GM23248 (cell line): ENCODE measurements at regions of chr16 and their contacts with region 1.

Region 1: GRCh38 chr16:51151961-51152663 is 1.0 kb upstream of the SALL1 start:
- DNase-seq: peak; percentile 94
- H3K4me3 ChIP-seq: peak overlapping the region; percentile 97
- H3K27ac ChIP-seq: peak overlapping the region; percentile 94
- H3K4me1 ChIP-seq: peaks cover 29% of the 10 kb centered on the region
- H3K27me3 ChIP-seq: no peaks in the 10 kb centered on the region

Region 2: DNA sequence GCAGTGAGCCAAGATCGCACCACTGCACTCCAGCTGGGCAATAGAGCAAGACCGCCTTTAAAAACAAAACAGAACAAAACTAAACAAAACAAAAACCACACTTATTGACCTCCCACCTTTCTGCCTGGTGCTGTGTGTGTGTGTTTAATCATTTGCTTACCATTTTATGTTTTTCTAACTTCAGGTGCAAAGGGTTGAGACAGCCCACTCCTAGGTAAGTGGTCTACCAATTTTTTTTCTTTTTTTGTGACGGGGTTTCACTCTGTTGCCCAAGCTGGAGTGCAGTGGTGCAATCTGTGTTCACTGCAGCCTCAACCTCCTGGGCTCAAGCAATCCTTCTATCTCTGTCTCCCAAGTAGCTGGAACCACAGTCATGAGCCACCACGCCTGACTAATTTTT is 66.8 kb before region 1 on chr16:
- in situ Hi-C with region 1: no loop called
- DNase-seq: no peak
- H3K4me3 ChIP-seq: no peak overlapping the region
- H3K27ac ChIP-seq: no peak overlapping the region
- H3K4me1 ChIP-seq: no peaks in the 10 kb centered on the region
- H3K27me3 ChIP-seq: no peaks in the 10 kb centered on the region

Region 3: GRCh38 chr16:51569203-51569931 is 417.3 kb after region 1 on chr16:
- in situ Hi-C with region 1: loop called (anchors 25 kb)
- DNase-seq: peak; percentile 52
- H3K4me3 ChIP-seq: no peak overlapping the region
- H3K27ac ChIP-seq: no peak overlapping the region
- H3K4me1 ChIP-seq: peaks cover 8% of the 10 kb centered on the region
- H3K27me3 ChIP-seq: peaks cover 13% of the 10 kb centered on the region